ENCODE measurements at regions of chr4 and their contacts with region 1.

Region 1: GRCh38 chr4:184649026-184649970 is at the starts of genes CASP3 and PRIMPOL:
- DNase-seq: peak; percentile 98
- H3K4me3 Mint-ChIP-seq: peak within 1 kb of the TSS; percentile 91
- H3K27ac Mint-ChIP-seq: peak within 1 kb of the TSS; percentile 91
- H3K4me1 Mint-ChIP-seq: peaks cover 50% of the 10 kb centered on the region
- H3K27me3 Mint-ChIP-seq: no peaks in the 10 kb centered on the region
- total RNA-seq, gene CASP3: 54.0 to 54.4 TPM
- total RNA-seq, gene PRIMPOL: 23.1 to 27.1 TPM

Region 2: DNA sequence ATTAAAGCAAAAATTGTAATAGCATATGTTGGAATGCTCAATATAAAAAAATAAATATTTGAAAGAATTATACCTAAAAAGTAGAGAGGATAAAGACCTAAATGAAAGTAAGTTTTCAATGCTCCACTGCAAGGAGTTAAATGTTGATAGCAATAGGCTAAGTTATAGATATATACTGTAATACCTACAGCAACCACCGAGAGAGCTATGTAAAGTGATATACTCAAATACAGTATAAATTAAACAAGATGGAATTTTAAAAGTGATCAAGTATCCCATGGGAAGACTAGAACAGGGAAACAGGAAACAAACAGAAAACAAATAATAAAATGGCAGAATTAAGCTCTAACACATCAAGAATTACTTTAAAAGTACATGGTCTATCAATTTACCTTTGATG is 74.0 kb before region 1 on chr4:
- CTCF ChIA-PET with region 1: interaction called, 3 read pairs
- POLR2A ChIA-PET with region 1: interaction called, 3 read pairs
- intact Hi-C with region 1: loop called (anchors 2 kb)
- DNase-seq: no peak
- H3K4me3 Mint-ChIP-seq: no peak overlapping the region
- H3K27ac Mint-ChIP-seq: no peak overlapping the region
- H3K4me1 Mint-ChIP-seq: peaks cover 17% of the 10 kb centered on the region
- H3K27me3 Mint-ChIP-seq: no peaks in the 10 kb centered on the region

Region 3: GRCh38 chr4:184705692-184706091 is 56.4 kb after region 1 on chr4:
- CTCF ChIA-PET with region 1: no interaction called
- POLR2A ChIA-PET with region 1: interaction called, 5 read pairs
- intact Hi-C with region 1: loop called (anchors 5 kb)
- DNase-seq: no peak
- H3K4me3 Mint-ChIP-seq: no peak overlapping the region
- H3K27ac Mint-ChIP-seq: peak overlapping the region; percentile 34
- H3K4me1 Mint-ChIP-seq: peaks cover 25% of the 10 kb centered on the region
- H3K27me3 Mint-ChIP-seq: no peaks in the 10 kb centered on the region